Heart left ventricle (tissue), 16 donors: ENCODE measurements at regions of chr7 and their contacts with region 1.

Region 1: DNA sequence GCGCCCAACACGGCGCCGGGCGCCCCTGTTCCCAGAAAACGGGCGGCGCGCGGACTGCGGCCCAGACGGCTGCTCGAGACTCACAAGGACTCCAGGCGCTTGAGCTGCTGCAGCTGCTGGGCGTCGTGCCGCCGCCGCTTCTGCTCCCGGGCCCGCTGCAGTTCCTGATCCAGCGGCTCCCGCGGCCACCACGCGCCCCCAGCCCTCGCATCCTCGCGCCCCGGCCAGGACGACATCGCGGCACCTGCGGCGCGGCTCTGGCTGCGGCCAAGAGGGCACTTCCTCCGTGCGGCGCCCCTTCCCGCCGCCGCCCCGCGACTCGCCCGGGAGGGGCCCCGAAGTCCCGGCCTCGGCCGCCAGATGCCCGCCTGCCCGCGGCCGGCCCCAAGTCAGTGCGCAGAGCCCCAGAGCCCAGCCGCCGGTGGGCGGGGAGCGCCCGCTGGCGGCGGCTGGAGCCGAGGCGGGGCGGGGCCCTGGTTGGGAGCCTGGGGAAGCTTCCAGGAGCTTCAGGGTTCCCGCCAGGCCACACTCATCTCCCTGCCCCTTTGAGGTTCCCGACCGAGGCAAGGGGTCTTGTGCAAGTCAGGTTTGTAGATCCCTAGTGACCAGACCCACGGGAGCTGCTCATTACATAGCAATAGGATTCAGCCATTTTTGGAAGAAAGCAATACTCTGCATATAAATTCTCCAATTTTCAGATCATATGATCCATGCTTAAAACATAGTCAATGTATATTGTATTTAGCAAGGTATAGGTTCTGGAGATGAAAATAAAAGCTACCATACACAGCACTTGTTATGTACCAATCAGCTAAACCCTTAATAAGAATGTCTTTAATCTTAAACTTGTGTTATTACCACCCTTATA is 14.2 kb upstream of the FKBP9 start:
- DNase-seq: peak; percentile 83 to 90 (median 87)
- ATAC-seq: peak; percentile 70 to 98 (median 94)
- H3K4me3 ChIP-seq: peak overlapping the region; percentile 61 to 95 (median 83)
- H3K27ac ChIP-seq: peak overlapping the region; percentile 84 to 99 (median 97)
- H3K4me1 ChIP-seq: peaks cover 0 to 37% (median 16%) of the 10 kb centered on the region in 12 donors
- H3K27me3 ChIP-seq: no peaks in the 10 kb centered on the region
- CTCF ChIP-seq: peak; percentile 48 to 83 (median 74)
- POLR2A ChIP-seq: peak in 1 of 2 donors; percentile 25

Region 2: GRCh38 chr7:32283546-32283945 is 659.5 kb before region 1 on chr7:
- intact Hi-C with region 1: no loop called
- DNase-seq: no peak
- ATAC-seq: no peak
- H3K4me3 ChIP-seq: no peak overlapping the region
- H3K27ac ChIP-seq: no peak overlapping the region
- H3K4me1 ChIP-seq: no peaks in the 10 kb centered on the region
- H3K27me3 ChIP-seq: no peaks in the 10 kb centered on the region
- CTCF ChIP-seq: no peak
- POLR2A ChIP-seq: no peak

Region 3: DNA sequence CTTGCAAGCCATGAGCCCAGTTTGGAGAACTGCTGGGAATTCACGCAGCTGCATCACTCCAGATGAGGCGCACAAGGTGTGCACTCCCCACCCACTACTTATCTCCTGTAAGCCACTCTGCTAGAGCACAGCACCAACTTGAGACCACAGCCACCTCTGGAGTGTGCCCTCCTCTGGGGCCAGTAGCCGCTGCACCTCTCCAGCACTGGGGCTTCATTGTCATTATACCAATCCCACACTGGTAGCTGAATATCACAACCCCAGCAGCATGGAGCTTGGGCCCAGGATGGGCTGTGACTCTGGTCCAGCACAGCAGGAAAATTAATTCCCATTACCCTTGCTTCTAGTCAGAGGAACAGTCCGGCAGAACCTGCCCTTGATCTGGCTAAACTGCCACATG is 578.4 kb before region 1 on chr7:
- intact Hi-C with region 1: no loop called
- DNase-seq: no peak
- ATAC-seq: no peak
- H3K4me3 ChIP-seq: no peak overlapping the region
- H3K27ac ChIP-seq: no peak overlapping the region
- H3K4me1 ChIP-seq: no peaks in the 10 kb centered on the region
- H3K27me3 ChIP-seq: peaks cover 0 to 9% (median 0%) of the 10 kb centered on the region in 9 donors
- CTCF ChIP-seq: no peak
- POLR2A ChIP-seq: no peak

Region 4: DNA sequence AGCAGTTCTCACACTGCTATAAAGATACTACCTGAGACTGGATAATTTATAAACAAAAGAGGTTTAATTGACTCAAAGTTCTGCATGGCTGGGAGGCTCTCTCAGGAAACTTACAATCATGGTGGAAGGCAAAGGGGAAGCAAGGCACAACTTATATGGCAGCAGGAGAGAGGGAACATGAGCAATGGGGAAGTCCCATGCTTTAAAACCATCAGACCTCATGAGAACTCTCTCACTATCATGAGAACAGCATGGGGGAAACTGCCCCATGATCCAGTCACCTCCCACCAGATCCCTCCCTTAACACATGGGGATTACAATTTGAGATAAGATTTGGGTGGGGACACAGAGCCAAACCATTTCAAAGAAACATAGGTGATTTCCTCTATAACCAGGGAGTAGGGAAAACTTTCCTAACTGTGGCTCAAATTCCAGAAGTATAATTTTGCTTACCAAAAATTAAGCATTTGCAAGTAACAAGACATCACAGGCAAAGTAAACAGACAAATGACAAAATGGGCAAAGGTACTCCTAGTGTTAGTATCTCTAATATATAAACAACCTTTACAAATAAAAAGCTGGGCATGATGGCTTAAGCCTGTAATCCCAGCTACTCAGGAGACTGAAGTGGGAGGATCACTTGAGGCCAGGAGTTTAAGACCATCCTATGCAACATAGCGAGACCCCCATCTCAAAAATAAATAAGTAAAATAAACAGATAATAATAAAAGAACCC is 139.4 kb before region 1 on chr7:
- intact Hi-C with region 1: loop called in 5 of 10 experiments (anchors 2 to 10 kb)
- DNase-seq: no peak
- ATAC-seq: no peak
- H3K4me3 ChIP-seq: no peak overlapping the region
- H3K27ac ChIP-seq: no peak overlapping the region
- H3K4me1 ChIP-seq: peaks cover 0 to 5% (median 0%) of the 10 kb centered on the region in 12 donors
- H3K27me3 ChIP-seq: no peaks in the 10 kb centered on the region
- CTCF ChIP-seq: no peak
- POLR2A ChIP-seq: no peak

Region 5: DNA sequence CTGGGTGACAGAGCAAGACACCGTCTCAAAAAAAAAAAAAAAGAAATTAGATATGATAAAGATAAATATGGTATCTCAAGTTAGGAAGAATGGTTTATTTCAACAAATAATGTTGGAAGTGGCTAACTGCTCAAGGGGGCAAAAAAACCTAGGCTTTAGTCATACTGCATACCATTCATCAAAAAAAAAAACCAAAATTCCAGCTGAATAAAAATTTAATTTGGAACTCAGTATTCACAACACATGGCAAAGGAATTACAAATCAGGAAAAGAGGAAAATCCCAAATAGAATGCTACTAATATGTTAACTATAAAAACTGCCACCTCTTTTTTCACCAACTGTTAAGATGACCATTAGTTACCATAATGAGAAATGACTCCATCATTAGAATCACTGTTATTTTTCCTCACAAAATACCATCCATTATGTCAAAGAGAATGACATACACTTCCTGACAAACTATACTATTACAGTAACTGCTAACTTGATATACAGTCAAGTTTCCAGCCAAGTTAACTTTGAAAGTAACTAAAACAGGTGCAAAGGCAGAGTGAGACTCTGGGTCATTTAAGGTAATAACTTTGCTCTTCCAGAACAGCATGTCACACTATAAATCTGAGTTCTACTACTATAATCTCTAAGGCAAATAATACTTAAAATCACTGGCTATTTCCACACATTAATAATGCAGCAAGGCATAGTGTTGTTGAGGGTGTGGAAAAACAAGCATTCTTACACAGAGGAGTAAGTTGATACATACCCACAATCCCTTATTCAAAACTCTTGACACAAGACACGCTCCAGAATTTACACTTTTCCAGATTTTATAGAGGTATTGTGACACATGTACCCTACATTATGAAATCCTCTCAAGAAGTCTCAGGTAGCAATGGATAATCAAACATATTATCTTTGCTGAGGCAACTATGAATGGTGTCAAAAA is 61.7 kb before region 1 on chr7:
- intact Hi-C with region 1: loop called in 1 of 10 experiments (anchors 10 kb)
- DNase-seq: no peak
- ATAC-seq: peak in 1 of 4 donors; percentile 22
- H3K4me3 ChIP-seq: no peak overlapping the region
- H3K27ac ChIP-seq: peak overlapping the region in 5 of 12 donors; percentile 3 to 33 (median 23)
- H3K4me1 ChIP-seq: peaks cover 0 to 99% (median 60%) of the 10 kb centered on the region in 12 donors
- H3K27me3 ChIP-seq: no peaks in the 10 kb centered on the region
- CTCF ChIP-seq: no peak
- POLR2A ChIP-seq: no peak

Region 6: GRCh38 chr7:32957326-32958045 is 14.5 kb after region 1 on chr7 and contains the start of gene FKBP9:
- intact Hi-C with region 1: loop called in 2 of 10 experiments (anchors 1 to 2 kb)
- DNase-seq: peak; percentile 85 to 96 (median 90)
- ATAC-seq: peak; percentile 85 to 97 (median 94)
- H3K4me3 ChIP-seq: peak within 1 kb of the TSS; percentile 79 to 100 (median 92)
- H3K27ac ChIP-seq: peak within 1 kb of the TSS; percentile 89 to 100 (median 98)
- H3K4me1 ChIP-seq: peaks cover 0 to 32% (median 13%) of the 10 kb centered on the region in 12 donors
- H3K27me3 ChIP-seq: no peaks in the 10 kb centered on the region
- CTCF ChIP-seq: peak in 1 of 12 donors; percentile 6
- POLR2A ChIP-seq: peak in 1 of 2 donors; percentile 85
- total RNA-seq, gene FKBP9: 91.1 to 146 (median 130) TPM

Region 7: GRCh38 chr7:33050535-33051318 is 107.7 kb after region 1 on chr7:
- intact Hi-C with region 1: loop called in 4 of 10 experiments (anchors 10 kb)
- DNase-seq: no peak
- ATAC-seq: peak in 3 of 4 donors; percentile 48 to 76 (median 66)
- H3K4me3 ChIP-seq: peak overlapping the region in 4 of 12 donors; percentile 11 to 47 (median 14)
- H3K27ac ChIP-seq: peak overlapping the region in 8 of 12 donors; percentile 8 to 85 (median 42)
- H3K4me1 ChIP-seq: peaks cover 0 to 54% (median 12%) of the 10 kb centered on the region in 12 donors
- H3K27me3 ChIP-seq: no peaks in the 10 kb centered on the region
- CTCF ChIP-seq: peak; percentile 48 to 76 (median 68)
- POLR2A ChIP-seq: no peak